Posterior cingulate gyrus (tissue), 11 donors: ENCODE measurements at regions of chr19 and their contacts with region 1.

Region 1: GRCh38 chr19:17511724-17512573 is 500 bp downstream of the PGLS start:
- DNase-seq: peak; percentile 81 to 98 (median 86)

Region 2: GRCh38 chr19:17441241-17442021 is 70.5 kb before region 1 on chr19:
- intact Hi-C with region 1: no loop called
- DNase-seq: peak in 2 of 10 donors; percentile 10 to 38

Region 3: DNA sequence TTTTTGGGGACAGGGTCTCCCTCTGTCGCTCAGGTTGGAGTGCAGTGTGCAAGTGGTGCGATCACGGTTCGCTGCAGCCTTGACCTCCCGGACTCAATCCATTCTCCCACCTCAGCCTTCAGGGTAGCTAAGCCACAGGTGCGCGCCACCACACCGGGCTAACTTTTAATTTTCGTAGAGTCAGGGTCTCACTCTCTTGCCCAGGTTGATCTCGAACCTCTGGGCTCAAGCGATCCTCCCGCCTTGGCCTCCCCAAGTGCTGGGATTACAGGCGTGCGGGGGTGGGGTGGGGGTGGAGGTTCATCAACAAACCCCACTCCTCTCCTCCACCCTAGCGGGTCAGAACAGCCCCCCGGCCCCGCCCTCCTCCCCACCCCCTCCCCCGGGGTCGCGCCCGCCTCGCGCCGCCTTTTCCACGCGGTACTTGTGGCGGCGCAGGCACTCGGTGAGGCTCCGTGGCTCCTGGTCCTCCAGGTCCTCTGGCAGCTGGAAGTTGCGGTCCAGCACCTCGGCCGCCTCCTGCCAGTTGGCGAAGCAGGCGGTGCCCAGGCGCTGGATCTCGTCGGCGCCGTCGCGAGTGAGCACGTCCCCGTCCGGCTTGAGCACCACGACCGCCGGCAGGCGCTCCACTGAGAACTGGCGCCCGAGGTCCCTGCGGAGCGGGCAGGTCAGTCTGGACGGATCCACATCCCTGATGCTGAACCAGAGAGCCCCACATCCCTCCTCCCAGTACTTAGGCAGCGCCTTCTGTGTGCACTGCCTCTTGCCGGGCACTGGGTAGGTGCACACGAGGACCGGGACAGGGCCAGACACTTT is 56.4 kb before region 1 on chr19:
- intact Hi-C with region 1: no loop called
- DNase-seq: peak in 2 of 10 donors; percentile 48 to 52

Region 4: DNA sequence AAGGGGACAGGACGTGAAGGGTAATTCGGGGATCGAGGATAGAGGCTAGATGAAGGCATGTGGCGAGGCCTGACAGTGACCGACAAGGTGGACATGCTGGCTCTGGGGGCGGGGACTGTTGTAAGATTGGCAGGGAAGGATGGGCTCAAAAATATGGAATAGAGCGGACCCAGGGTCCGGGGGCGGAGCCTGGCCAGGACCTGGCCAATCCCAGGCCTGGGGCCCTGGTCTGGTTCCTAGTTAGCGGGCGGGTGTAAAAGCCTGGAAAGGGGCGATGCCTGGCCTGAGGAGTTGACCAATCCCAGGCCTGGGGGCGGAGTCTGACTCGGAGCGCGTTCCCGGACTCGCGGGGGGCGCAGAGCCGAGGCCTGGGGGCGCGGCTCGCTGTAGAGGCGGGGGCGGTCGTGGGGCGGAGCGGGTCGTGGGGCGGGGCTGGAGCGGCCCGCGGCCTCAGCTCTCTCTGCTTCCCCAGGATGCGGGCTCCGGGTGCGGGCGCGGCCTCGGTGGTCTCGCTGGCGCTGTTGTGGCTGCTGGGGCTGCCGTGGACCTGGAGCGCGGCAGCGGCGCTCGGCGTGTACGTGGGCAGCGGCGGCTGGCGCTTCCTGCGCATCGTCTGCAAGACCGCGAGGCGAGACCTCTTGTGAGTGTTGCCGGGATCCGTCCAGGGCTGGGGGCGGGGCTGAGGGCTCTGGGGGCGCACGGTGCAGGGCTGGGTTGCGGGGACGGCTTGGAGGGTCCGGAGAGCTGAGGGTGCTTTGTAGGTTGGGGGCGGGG is 41.7 kb before region 1 on chr19 and contains the start of gene SLC27A1:
- intact Hi-C with region 1: loop called (anchors 1 kb)
- DNase-seq: peak; percentile 99 to 100 (median 100)

Region 5: GRCh38 chr19:17555480-17555928 is 43.6 kb after region 1 on chr19 and contains the start of gene COLGALT1:
- intact Hi-C with region 1: loop called (anchors 2 kb)
- DNase-seq: peak; percentile 98 to 100 (median 99)

Region 6: GRCh38 chr19:17932485-17933338 is 420.8 kb after region 1 on chr19 and contains the start of gene CCDC124:
- intact Hi-C with region 1: loop called (anchors 5 kb)
- DNase-seq: peak; percentile 80 to 97 (median 85)